Heart right ventricle (tissue), 16 donors: ENCODE measurements at regions of chr15 and their contacts with region 1.

Region 1: GRCh38 chr15:65212097-65212496 is 824 bp upstream of the CILP start:
- DNase-seq: no peak
- ATAC-seq: no peak
- H3K4me3 ChIP-seq: no peak overlapping the region
- H3K27ac ChIP-seq: peak overlapping the region in 4 of 10 donors; percentile 43 to 79 (median 57)
- H3K4me1 ChIP-seq: peaks cover 0 to 44% (median 7%) of the 10 kb centered on the region in 9 donors
- H3K27me3 ChIP-seq: no peaks in the 10 kb centered on the region
- CTCF ChIP-seq: peak in 7 of 9 donors; percentile 20 to 44 (median 28)

Region 2: GRCh38 chr15:65258375-65259262 is 46.5 kb after region 1 on chr15:
- intact Hi-C with region 1: loop called in 1 of 10 experiments (anchors 5 kb)
- DNase-seq: no peak
- ATAC-seq: peak in 4 of 8 donors; percentile 15 to 64 (median 24)
- H3K4me3 ChIP-seq: no peak overlapping the region
- H3K27ac ChIP-seq: peak overlapping the region; percentile 25 to 83 (median 48)
- H3K4me1 ChIP-seq: peaks cover 0 to 20% (median 6%) of the 10 kb centered on the region in 9 donors
- H3K27me3 ChIP-seq: no peaks in the 10 kb centered on the region
- CTCF ChIP-seq: no peak

Region 3: GRCh38 chr15:65395567-65396185 is 183.6 kb after region 1 on chr15:
- intact Hi-C with region 1: loop called in 1 of 10 experiments (anchors 10 kb)
- DNase-seq: no peak
- ATAC-seq: peak in 2 of 8 donors; percentile 6 to 14
- H3K4me3 ChIP-seq: peak overlapping the region in 7 of 10 donors; percentile 5 to 34 (median 14)
- H3K27ac ChIP-seq: no peak overlapping the region
- H3K4me1 ChIP-seq: peaks cover 0 to 19% (median 5%) of the 10 kb centered on the region in 9 donors
- H3K27me3 ChIP-seq: peaks cover 5 to 55% (median 48%) of the 10 kb centered on the region in 7 donors
- CTCF ChIP-seq: no peak